ENCODE measurements at regions of chr13 and their contacts with region 1.

Region 1: DNA sequence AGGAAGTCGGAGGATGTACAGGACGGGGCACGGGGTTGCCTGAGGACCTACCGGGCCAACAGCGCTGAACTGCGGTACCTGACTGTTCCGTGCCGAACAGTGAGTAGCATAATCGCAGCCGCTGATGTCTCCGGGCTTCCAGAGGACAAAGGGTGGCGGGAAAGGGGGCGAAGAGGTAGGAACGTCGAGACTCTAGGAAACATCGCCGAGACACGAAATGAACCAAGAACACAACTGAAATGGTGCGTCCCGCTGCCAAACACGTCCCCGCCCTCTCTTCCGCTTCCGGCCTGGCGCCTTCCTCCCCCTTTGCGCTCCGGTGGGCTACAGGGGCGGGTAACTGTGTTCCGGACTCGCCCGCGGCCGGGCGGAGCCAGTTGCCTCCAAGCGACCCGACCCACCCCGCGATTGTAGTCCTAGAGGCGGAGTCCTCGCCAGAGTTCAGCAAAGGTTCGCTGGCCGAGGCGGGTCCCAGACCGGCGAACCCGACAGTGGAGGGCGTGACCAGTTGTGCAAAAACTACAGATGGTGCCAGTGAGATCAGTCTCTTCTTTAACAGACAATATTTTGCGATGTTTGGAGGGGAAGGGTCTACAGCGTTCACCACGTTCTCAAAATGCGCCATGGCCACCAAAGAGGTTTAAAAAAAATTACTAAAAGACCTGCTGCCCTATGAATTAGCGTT is at the start of gene MRPS31:
- DNase-seq: peak; percentile 97 to 98
- ATAC-seq: peak; percentile 99
- H3K4me3 ChIP-seq: peak within 1 kb of the TSS; percentile 61 to 62
- H3K27ac ChIP-seq: peak within 1 kb of the TSS in 1 of 2 donors; percentile 49
- H3K4me1 ChIP-seq: peaks cover 0 to 4% of the 10 kb centered on the region in 2 donors
- H3K27me3 ChIP-seq: no peaks in the 10 kb centered on the region
- total RNA-seq, gene MRPS31: 14.6 to 20.5 TPM

Region 2: GRCh38 chr13:39684531-39685137 is 1086.4 kb before region 1 on chr13:
- intact Hi-C with region 1: loop called in 1 of 2 experiments (anchors 10 kb)
- DNase-seq: no peak
- ATAC-seq: no peak
- H3K4me3 ChIP-seq: no peak overlapping the region
- H3K27ac ChIP-seq: no peak overlapping the region
- H3K4me1 ChIP-seq: no peaks in the 10 kb centered on the region
- H3K27me3 ChIP-seq: no peaks in the 10 kb centered on the region